Pancreas (tissue), 10 donors: ENCODE measurements at regions of chr6 and their contacts with region 1.

Region 1: DNA sequence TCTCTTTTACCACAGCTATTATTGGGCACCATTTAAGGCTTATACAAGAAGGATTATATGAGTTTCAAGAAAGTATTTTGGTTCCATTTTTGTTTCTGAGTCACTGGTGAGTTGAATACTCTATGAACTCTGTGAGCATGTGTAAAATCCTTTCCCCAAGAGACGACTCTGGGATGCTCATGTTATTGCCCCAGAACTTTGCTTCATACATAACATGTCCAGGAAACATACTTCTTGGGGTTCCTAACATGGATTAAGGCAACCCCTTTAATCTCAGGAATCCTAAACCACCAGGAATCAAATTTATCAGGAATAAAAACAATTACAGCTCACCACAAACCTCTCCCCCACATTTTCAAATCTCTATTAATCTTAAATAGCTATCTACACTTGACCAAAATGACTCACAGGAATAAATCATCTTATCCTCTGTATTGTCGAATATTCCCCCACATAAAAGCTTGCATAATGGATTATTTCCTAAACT is 117.5 kb upstream of the COL21A1 start:
- DNase-seq: no peak
- ATAC-seq: peak in 2 of 4 donors; percentile 19 to 44
- H3K4me3 ChIP-seq: no peak overlapping the region
- H3K27ac ChIP-seq: no peak overlapping the region
- H3K4me1 ChIP-seq: peaks cover 0 to 13% (median 0%) of the 10 kb centered on the region in 3 donors
- H3K27me3 ChIP-seq: no peaks in the 10 kb centered on the region
- CTCF ChIP-seq: no peak

Region 2: GRCh38 chr6:56314683-56315523 is 50.0 kb before region 1 on chr6:
- intact Hi-C with region 1: no loop called
- DNase-seq: peak in 2 of 6 donors; percentile 10 to 45
- ATAC-seq: peak; percentile 85 to 98 (median 92)
- H3K4me3 ChIP-seq: no peak overlapping the region
- H3K27ac ChIP-seq: no peak overlapping the region
- H3K4me1 ChIP-seq: no peaks in the 10 kb centered on the region
- H3K27me3 ChIP-seq: no peaks in the 10 kb centered on the region
- CTCF ChIP-seq: peak; percentile 38 to 76 (median 64)

Region 3: DNA sequence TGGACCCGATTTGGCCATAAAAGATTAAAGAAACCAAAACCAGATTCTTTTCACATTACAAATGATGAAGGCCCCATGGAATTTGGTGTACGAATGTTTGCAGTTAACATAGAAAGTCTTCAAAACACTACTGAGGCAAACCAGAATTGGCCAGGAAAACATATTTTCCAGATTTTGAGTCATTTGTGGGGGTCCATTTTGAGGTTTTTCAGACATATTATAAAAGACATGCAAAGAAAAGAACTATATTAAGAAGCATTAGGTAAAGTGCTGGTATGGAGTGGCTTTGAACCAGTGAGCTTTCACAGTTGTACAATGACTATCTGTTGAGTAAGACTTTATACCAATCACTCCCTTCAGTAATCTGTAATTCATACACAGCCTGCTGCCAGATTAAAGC is 51.4 kb after region 1 on chr6:
- intact Hi-C with region 1: no loop called
- DNase-seq: no peak
- ATAC-seq: no peak
- H3K4me3 ChIP-seq: no peak overlapping the region
- H3K27ac ChIP-seq: no peak overlapping the region
- H3K4me1 ChIP-seq: no peaks in the 10 kb centered on the region
- H3K27me3 ChIP-seq: no peaks in the 10 kb centered on the region
- CTCF ChIP-seq: no peak

Region 4: DNA sequence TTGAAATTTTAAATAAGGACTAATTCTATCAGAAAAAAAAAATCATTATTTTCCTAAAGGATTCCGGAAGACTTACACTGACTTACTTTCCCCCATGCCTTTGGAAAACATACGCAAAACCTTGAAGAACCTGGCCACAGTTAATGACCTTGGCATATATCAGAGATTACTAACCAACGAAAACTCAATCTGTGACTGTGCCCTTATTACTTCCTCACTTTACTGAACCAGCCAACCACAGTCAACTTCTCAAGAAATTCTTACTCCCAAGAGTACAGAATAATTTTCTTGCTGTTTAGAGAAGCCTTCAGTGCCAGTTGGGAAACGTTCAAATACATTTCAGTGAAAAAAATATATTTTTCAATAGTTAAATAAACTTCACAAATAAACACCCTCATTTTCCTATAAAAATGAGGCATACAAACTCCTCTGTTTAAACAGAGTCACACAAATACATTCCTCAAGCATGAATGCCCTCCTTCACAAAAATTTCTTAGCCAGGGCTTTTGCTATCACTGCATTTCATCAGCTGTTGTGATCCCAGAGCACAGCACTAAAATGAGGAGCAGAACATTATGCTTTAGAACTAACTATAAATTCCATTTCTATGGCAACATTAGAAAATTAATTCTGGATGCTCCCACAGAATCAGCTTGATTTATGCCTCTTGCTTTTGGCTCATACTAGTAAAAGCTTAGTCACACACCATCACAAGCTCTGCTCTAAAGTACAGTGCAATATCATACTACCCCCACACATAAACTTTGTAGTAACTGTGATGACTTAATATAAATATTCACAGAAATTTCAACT is 160.2 kb after region 1 on chr6:
- intact Hi-C with region 1: no loop called
- DNase-seq: no peak
- ATAC-seq: peak; percentile 59 to 71 (median 68)
- H3K4me3 ChIP-seq: no peak overlapping the region
- H3K27ac ChIP-seq: peak overlapping the region in 2 of 4 donors; percentile 50 to 51
- H3K4me1 ChIP-seq: peaks cover 19 to 54% (median 38%) of the 10 kb centered on the region in 3 donors
- H3K27me3 ChIP-seq: no peaks in the 10 kb centered on the region
- CTCF ChIP-seq: no peak

Region 5: GRCh38 chr6:56552212-56553130 is 187.6 kb after region 1 on chr6:
- intact Hi-C with region 1: loop called in 1 of 3 experiments (anchors 5 kb)
- DNase-seq: no peak
- ATAC-seq: no peak
- H3K4me3 ChIP-seq: no peak overlapping the region
- H3K27ac ChIP-seq: no peak overlapping the region
- H3K4me1 ChIP-seq: no peaks in the 10 kb centered on the region
- H3K27me3 ChIP-seq: no peaks in the 10 kb centered on the region
- CTCF ChIP-seq: no peak